Sciatic nerve (tissue), 2 donors: ENCODE measurements at regions of chr1 and their contacts with region 1.

Region 1: GRCh38 chr1:192795916-192796618 is 12.8 kb upstream of the RGS2 start:
- DNase-seq: no peak
- ATAC-seq: no peak

Region 2: DNA sequence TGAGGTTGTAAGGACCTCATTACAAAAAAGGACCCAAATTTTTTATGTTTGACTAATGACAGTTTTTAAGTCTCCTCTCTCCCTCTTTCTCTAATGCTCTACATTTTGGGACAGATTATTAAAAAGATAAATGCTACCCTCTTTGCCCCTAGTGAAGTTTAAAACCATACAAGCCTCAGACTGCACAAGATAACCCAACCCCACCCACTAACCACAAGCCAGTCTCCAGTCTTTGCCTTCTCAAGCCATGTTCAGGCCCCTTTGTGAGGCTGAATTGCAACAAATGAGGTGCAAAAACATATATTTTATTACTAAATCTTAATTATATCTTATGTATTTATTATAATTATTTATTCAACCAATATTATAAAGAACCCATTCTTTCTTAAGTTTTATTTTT is 1721.2 kb before region 1 on chr1:
- intact Hi-C with region 1: loop called (anchors 5 kb)
- DNase-seq: no peak
- ATAC-seq: no peak